ENCODE measurements at regions of chr2 and their contacts with region 1.

Region 1: DNA sequence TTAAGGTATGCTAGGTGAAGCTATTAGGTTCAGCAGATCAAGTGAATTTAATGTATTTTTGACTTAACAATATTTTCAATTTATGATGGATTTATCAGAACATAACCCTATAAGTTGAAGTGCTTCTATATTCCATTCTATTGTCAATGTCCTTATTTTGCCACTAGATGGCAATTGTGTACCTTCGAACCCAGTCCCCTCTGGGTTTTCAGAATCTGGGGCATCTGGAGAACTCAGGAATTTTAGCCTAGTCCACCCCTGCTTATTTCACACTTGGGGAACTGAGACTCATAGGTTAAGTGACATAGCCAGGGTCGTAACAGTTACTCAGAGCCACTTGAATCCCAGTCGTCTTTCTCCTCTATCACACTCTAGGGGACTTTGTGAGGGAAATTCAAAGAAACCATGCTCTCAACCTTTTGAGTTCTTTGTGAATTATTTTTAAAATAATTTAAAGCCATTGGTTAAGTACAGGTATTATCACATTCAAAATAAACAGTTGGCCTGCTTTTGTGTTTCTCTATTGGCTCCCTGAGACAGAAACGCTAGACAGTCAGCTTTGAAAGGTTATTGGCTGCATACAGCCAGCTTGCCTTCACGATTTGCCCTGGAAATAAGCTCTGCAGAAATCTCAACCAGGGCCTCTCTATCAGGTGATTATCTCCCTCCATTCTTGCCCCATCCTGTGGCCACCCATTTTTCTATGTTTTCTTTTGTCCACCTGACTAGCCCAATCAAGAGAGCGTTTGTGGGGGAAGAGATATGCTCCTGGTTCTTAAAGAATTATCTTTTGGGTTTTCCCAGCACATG is 145.0 kb downstream of the TTC27 start:
- DNase-seq: peak in 1 of 5 donors; percentile 12
- ATAC-seq: peak; percentile 47 to 79 (median 67)
- H3K4me3 ChIP-seq: no peak overlapping the region
- H3K27ac ChIP-seq: peak overlapping the region in 6 of 12 donors; percentile 3 to 44 (median 22)
- H3K4me1 ChIP-seq: peaks cover 0 to 30% (median 8%) of the 10 kb centered on the region in 12 donors
- H3K27me3 ChIP-seq: no peaks in the 10 kb centered on the region
- CTCF ChIP-seq: peak; percentile 41 to 89 (median 80)
- POLR2A ChIP-seq: no peak

Region 2: GRCh38 chr2:32289165-32289999 is 483.5 kb before region 1 on chr2:
- intact Hi-C with region 1: no loop called
- DNase-seq: no peak
- ATAC-seq: peak in 3 of 4 donors; percentile 21 to 56 (median 41)
- H3K4me3 ChIP-seq: no peak overlapping the region
- H3K27ac ChIP-seq: peak overlapping the region in 5 of 12 donors; percentile 12 to 75 (median 35)
- H3K4me1 ChIP-seq: peaks cover 6 to 62% (median 41%) of the 10 kb centered on the region in 12 donors
- H3K27me3 ChIP-seq: no peaks in the 10 kb centered on the region
- CTCF ChIP-seq: no peak
- POLR2A ChIP-seq: no peak

Region 3: GRCh38 chr2:32446362-32446761 is 326.5 kb before region 1 on chr2:
- intact Hi-C with region 1: no loop called
- DNase-seq: no peak
- ATAC-seq: no peak
- H3K4me3 ChIP-seq: no peak overlapping the region
- H3K27ac ChIP-seq: no peak overlapping the region
- H3K4me1 ChIP-seq: no peaks in the 10 kb centered on the region
- H3K27me3 ChIP-seq: no peaks in the 10 kb centered on the region
- CTCF ChIP-seq: no peak
- POLR2A ChIP-seq: no peak

Region 4: DNA sequence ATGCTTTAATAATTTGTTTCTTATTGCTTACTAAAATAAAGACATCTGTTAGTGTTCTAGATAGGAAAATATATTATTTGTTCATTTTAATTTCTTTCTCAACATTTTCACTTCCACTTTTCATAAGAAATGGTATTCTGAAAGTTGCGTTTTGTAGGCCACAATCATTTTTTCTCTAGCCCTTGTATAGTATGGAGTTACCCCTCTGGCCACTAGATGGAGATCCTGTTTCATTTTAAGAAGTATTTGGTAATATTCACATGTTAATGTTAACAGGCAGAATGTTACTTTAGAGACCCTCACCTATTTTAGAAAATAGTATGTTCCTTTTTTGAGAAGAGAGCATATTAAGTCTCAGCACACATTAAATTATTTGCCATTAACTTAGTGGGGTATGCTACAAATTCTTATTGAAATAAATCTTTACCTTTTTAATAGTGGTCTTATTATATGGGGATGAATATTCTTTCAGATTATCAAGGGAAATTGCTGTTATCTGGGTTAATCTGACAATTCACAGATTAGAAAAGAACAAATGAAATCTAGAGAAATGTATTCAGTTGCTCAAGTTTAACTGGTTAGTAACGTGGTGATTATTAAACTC is 218.9 kb before region 1 on chr2:
- intact Hi-C with region 1: loop called in 2 of 10 experiments (anchors 10 kb)
- DNase-seq: no peak
- ATAC-seq: peak in 3 of 4 donors; percentile 63 to 73 (median 64)
- H3K4me3 ChIP-seq: no peak overlapping the region
- H3K27ac ChIP-seq: no peak overlapping the region
- H3K4me1 ChIP-seq: peaks cover 0 to 5% (median 0%) of the 10 kb centered on the region in 12 donors
- H3K27me3 ChIP-seq: no peaks in the 10 kb centered on the region
- CTCF ChIP-seq: peak; percentile 57 to 81 (median 72)
- POLR2A ChIP-seq: no peak

Region 5: GRCh38 chr2:32874931-32875330 is 102.1 kb after region 1 on chr2:
- intact Hi-C with region 1: no loop called
- DNase-seq: no peak
- ATAC-seq: no peak
- H3K4me3 ChIP-seq: peak overlapping the region in 3 of 12 donors; percentile 7 to 20 (median 20)
- H3K27ac ChIP-seq: no peak overlapping the region
- H3K4me1 ChIP-seq: peaks cover 0 to 21% (median 10%) of the 10 kb centered on the region in 12 donors
- H3K27me3 ChIP-seq: no peaks in the 10 kb centered on the region
- CTCF ChIP-seq: no peak
- POLR2A ChIP-seq: no peak

Region 6: GRCh38 chr2:33086400-33087015 is 313.7 kb after region 1 on chr2:
- intact Hi-C with region 1: loop called in 6 of 10 experiments (anchors 2 to 5 kb)
- DNase-seq: peak in 3 of 5 donors; percentile 30 to 54 (median 47)
- ATAC-seq: peak; percentile 3 to 54 (median 46)
- H3K4me3 ChIP-seq: peak overlapping the region in 1 of 12 donors; percentile 9
- H3K27ac ChIP-seq: peak overlapping the region in 6 of 12 donors; percentile 0 to 44 (median 23)
- H3K4me1 ChIP-seq: peaks cover 3 to 52% (median 29%) of the 10 kb centered on the region in 12 donors
- H3K27me3 ChIP-seq: no peaks in the 10 kb centered on the region
- CTCF ChIP-seq: peak in 7 of 12 donors; percentile 22 to 47 (median 37)
- POLR2A ChIP-seq: no peak

Region 7: DNA sequence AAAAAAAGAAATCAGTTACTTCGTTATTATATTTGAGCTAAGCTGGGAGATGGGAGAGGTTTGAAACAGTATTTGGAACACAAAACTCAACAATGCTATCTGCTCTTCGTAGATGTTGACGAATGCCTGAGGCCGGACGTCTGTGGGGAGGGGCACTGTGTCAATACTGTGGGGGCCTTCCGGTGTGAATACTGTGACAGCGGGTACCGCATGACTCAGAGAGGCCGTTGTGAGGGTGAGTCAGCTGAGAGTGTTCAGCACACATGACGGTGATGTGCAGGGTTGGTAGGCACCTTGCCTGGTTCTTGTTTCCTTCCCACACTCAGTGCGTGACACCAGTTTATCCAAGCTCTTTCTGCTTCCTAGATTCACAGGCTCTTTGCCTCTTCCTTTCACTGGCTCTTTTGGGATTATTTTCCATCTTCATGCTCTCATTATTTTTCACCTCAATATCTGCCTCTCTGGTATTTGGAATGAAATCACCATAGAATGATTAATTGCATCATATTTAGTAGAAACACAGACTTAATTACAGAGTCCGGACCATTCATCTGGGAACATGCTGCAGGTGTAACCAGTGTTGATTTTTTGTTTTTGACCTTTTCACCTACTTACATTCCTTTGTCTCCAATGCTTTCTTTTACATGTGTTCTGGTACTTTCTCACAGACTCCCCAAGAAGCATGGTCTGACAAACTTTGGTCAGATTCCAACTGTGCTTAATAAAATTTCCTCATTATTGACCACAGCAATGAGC is 503.0 kb after region 1 on chr2:
- intact Hi-C with region 1: loop called in 5 of 10 experiments (anchors 10 kb)
- DNase-seq: peak in 4 of 5 donors; percentile 29 to 66 (median 44)
- ATAC-seq: peak; percentile 40 to 80 (median 71)
- H3K4me3 ChIP-seq: no peak overlapping the region
- H3K27ac ChIP-seq: peak overlapping the region in 7 of 12 donors; percentile 9 to 89 (median 55)
- H3K4me1 ChIP-seq: peaks cover 0 to 21% (median 0%) of the 10 kb centered on the region in 12 donors
- H3K27me3 ChIP-seq: no peaks in the 10 kb centered on the region
- CTCF ChIP-seq: no peak
- POLR2A ChIP-seq: no peak

Region 8: DNA sequence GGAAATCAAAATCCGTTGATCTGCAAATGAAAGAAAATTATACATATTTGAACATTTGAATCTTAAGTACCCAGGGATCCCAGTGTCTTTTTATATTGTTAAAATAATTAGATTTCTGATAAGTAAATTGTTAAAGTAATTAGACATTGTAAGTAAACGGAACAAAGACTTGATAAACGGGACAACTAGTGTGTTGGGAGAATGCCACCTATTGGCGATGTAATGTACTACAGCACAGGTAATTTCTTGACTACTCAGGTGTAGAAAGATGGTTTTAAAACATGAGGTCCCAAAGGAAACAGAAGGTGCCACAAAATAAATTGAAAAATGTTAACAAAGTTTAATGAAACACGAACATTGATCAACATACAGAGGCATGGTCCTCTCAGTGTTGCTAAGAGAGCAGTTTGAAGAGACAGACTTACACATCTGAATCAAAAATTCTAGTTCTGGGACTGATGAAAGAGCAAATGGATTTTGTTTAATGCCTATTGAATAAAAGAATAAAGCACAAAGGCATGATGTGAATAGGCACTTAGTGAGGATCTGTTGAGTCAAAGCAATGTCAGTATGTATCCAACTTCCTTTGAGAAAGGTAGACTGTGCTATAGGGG is 600.2 kb after region 1 on chr2:
- intact Hi-C with region 1: loop called in 5 of 10 experiments (anchors 10 kb)
- DNase-seq: no peak
- ATAC-seq: no peak
- H3K4me3 ChIP-seq: no peak overlapping the region
- H3K27ac ChIP-seq: no peak overlapping the region
- H3K4me1 ChIP-seq: peaks cover 0 to 5% (median 0%) of the 10 kb centered on the region in 12 donors
- H3K27me3 ChIP-seq: no peaks in the 10 kb centered on the region
- CTCF ChIP-seq: peak; percentile 67 to 86 (median 76)
- POLR2A ChIP-seq: no peak

Region 9: GRCh38 chr2:33583194-33583938 is 810.5 kb after region 1 on chr2:
- intact Hi-C with region 1: loop called in 7 of 10 experiments (anchors 5 to 10 kb)
- DNase-seq: no peak
- ATAC-seq: peak in 2 of 4 donors; percentile 47 to 48
- H3K4me3 ChIP-seq: no peak overlapping the region
- H3K27ac ChIP-seq: peak overlapping the region in 2 of 12 donors; percentile 28 to 36
- H3K4me1 ChIP-seq: peaks cover 0 to 25% (median 8%) of the 10 kb centered on the region in 12 donors
- H3K27me3 ChIP-seq: no peaks in the 10 kb centered on the region
- CTCF ChIP-seq: peak; percentile 70 to 88 (median 82)
- POLR2A ChIP-seq: no peak